Naive thymus-derived CD4-positive, alpha-beta T cell (primary cell): ENCODE measurements at regions of chr16 and their contacts with region 1.

Region 1: DNA sequence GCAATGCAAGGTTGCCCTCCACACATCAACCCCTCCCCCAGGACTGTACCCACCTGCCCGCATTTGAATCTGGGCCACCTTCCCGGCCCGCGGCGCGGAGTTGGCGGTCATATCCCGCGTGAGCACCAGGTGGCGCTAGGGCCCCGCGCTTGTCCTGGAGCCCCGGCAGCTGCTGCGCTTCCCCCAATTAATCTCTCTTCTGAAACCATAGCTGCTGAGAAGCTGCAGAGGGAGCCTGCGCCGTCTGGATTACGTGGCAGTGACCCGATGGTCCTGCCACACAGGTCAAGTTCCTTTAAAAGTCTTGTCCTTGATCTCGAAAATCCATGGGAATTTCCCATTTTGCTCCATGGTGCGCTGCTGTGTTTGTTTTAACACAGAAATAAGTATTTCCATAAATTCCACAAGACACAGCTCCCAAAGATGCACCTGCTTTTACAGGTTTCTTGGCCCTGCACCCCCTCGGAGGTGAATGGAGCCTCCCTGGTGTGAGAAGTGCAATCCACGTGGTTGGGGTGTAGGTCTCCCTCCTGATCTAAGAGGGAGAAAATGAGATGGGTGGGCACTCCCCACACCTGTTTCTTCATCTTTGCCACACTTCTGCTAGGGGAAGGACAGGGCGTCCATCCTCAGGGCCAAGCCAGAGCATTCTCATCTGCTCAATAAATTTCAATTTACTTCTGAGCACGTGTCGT is 22.1 kb downstream of the COX4I1 start:
- DNase-seq: peak; percentile 56 to 88 (median 79)
- ATAC-seq: peak; percentile 93
- H3K4me3 ChIP-seq: no peak overlapping the region
- H3K4me3 Mint-ChIP-seq: no peak overlapping the region
- H3K27ac ChIP-seq: no peak overlapping the region
- H3K27ac Mint-ChIP-seq: no peak overlapping the region
- H3K4me1 ChIP-seq: no peaks in the 10 kb centered on the region
- H3K4me1 Mint-ChIP-seq: peaks cover 0 to 7% (median 5%) of the 10 kb centered on the region in 7 donors
- H3K27me3 ChIP-seq: no peaks in the 10 kb centered on the region
- H3K27me3 Mint-ChIP-seq: peaks cover 0 to 6% (median 4%) of the 10 kb centered on the region in 5 donors

Region 2: GRCh38 chr16:84959045-84959576 is 862.5 kb before region 1 on chr16:
- CTCF ChIA-PET with region 1: no interaction called
- POLR2A ChIA-PET with region 1: no interaction called
- intact Hi-C with region 1: no loop called
- DNase-seq: no peak
- ATAC-seq: no peak
- H3K4me3 ChIP-seq: no peak overlapping the region
- H3K4me3 Mint-ChIP-seq: no peak overlapping the region
- H3K27ac ChIP-seq: no peak overlapping the region
- H3K27ac Mint-ChIP-seq: no peak overlapping the region
- H3K4me1 ChIP-seq: no peaks in the 10 kb centered on the region
- H3K4me1 Mint-ChIP-seq: no peaks in the 10 kb centered on the region
- H3K27me3 ChIP-seq: no peaks in the 10 kb centered on the region
- H3K27me3 Mint-ChIP-seq: peaks cover 0 to 7% (median 0%) of the 10 kb centered on the region in 5 donors

Region 3: GRCh38 chr16:85759631-85760419 is 61.8 kb before region 1 on chr16:
- CTCF ChIA-PET with region 1: no interaction called
- POLR2A ChIA-PET with region 1: no interaction called
- intact Hi-C with region 1: no loop called
- DNase-seq: no peak
- ATAC-seq: peak; percentile 60
- H3K4me3 ChIP-seq: no peak overlapping the region
- H3K4me3 Mint-ChIP-seq: no peak overlapping the region
- H3K27ac ChIP-seq: no peak overlapping the region
- H3K27ac Mint-ChIP-seq: peak overlapping the region in 1 of 9 donors; percentile 41
- H3K4me1 ChIP-seq: no peaks in the 10 kb centered on the region
- H3K4me1 Mint-ChIP-seq: peaks cover 7 to 11% (median 7%) of the 10 kb centered on the region in 7 donors
- H3K27me3 ChIP-seq: no peaks in the 10 kb centered on the region
- H3K27me3 Mint-ChIP-seq: peaks cover 11 to 21% (median 17%) of the 10 kb centered on the region in 5 donors

Region 4: DNA sequence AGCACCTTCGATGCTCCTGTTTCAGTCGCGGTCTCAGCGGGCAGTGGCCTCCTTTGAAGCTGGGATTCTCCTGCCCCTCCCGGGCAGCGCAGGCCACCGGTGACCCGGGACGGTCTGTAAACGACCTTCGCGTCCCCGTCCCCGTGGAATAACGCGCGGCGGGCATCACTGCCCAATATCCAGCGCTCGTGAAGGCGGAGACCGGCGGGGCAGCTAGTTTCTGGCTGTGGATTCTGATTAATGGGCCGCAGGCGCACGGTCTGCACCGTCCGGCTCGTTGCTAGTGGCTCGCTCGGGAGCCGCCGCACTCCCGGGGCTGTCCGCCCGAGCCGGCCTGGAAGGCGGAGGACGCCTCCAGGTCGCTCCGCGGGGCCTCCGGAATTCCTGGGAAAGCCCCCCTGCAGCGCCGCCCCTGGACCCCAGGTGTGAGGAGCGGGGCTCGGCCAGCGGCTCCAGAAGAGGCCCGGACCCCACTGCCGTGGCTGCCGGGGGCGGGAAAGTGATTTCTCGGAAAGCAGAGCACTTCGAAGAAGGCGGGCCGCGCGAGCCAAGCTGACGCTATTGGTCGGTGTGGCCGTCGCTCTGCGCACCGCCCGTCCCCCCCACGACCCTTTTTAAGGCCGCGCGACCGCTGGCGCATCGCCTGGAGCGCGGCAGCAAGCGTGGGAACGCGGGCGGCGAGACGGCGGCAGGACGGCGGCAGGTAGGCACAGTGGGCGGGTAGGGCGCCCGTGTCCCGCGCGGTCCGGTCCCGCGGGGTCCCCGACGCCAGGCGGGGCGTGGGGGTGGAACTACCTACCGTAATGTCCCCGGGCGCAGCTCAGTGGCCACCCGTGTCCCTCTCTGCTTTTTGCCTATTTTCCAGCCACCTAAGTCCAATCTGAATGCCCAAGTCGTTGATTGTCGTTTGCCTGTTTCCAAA is 77.2 kb after region 1 on chr16 and contains the start of gene IRF8:
- CTCF ChIA-PET with region 1: interaction called, 3 read pairs
- POLR2A ChIA-PET with region 1: no interaction called
- intact Hi-C with region 1: loop called (anchors 1 to 5 kb)
- DNase-seq: peak; percentile 55 to 86 (median 65)
- ATAC-seq: peak; percentile 79
- H3K4me3 ChIP-seq: peak within 1 kb of the TSS; percentile 51
- H3K4me3 Mint-ChIP-seq: peak within 1 kb of the TSS; percentile 79 to 92 (median 88)
- H3K27ac ChIP-seq: peak within 1 kb of the TSS; percentile 60
- H3K27ac Mint-ChIP-seq: peak within 1 kb of the TSS; percentile 13 to 83 (median 64)
- H3K4me1 ChIP-seq: peaks cover 18 to 23% of the 10 kb centered on the region in 2 donors
- H3K4me1 Mint-ChIP-seq: peaks cover 37 to 55% (median 51%) of the 10 kb centered on the region in 7 donors
- H3K27me3 ChIP-seq: no peaks in the 10 kb centered on the region
- H3K27me3 Mint-ChIP-seq: peaks cover 0 to 9% (median 0%) of the 10 kb centered on the region in 5 donors
- total RNA-seq, gene IRF8: 3.5 to 105 (median 19.9) TPM

Region 5: DNA sequence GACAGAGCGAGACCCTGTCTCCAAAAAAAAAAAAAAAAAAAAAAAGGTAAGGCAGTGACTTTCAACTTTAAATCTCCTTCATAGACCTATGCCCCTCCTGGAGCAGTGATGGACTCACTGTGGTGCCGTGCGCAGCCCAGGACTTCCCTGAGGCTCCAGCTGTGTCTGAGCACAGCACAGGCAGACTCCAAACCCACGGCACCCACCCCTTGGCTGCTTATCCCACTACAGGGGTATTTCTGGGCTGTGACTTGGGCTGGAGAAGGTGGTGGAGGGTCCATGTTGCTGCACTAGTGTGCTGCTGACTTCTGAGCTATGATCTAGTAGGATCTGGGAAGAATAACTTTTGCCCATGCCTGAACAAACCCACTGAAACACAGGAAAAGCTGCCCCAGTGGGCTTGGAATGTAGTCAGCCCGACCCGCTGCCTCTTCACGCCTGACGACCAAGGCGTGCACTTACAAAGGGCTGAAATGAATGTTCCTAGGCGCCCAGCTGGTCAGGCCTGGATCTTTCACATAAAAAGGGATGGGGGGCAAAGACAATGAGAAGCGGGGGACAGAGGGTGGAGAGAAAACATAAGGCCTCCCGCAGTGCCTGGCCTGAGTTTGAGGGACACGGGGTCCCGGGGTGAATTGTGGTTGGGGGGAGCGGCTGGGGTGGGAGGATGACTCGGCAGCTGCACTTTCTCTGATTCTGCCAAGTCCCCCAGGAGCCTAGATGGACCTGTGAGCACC is 160.4 kb after region 1 on chr16:
- CTCF ChIA-PET with region 1: interaction called, 168 read pairs
- POLR2A ChIA-PET with region 1: no interaction called
- intact Hi-C with region 1: loop called (anchors 1 kb)
- DNase-seq: no peak
- ATAC-seq: no peak
- H3K4me3 ChIP-seq: no peak overlapping the region
- H3K4me3 Mint-ChIP-seq: no peak overlapping the region
- H3K27ac ChIP-seq: no peak overlapping the region
- H3K27ac Mint-ChIP-seq: peak overlapping the region in 1 of 9 donors; percentile 25
- H3K4me1 ChIP-seq: no peaks in the 10 kb centered on the region
- H3K4me1 Mint-ChIP-seq: peaks cover 0 to 24% (median 4%) of the 10 kb centered on the region in 7 donors
- H3K27me3 ChIP-seq: no peaks in the 10 kb centered on the region
- H3K27me3 Mint-ChIP-seq: peaks cover under 1 to 25% (median 10%) of the 10 kb centered on the region in 5 donors

Region 6: DNA sequence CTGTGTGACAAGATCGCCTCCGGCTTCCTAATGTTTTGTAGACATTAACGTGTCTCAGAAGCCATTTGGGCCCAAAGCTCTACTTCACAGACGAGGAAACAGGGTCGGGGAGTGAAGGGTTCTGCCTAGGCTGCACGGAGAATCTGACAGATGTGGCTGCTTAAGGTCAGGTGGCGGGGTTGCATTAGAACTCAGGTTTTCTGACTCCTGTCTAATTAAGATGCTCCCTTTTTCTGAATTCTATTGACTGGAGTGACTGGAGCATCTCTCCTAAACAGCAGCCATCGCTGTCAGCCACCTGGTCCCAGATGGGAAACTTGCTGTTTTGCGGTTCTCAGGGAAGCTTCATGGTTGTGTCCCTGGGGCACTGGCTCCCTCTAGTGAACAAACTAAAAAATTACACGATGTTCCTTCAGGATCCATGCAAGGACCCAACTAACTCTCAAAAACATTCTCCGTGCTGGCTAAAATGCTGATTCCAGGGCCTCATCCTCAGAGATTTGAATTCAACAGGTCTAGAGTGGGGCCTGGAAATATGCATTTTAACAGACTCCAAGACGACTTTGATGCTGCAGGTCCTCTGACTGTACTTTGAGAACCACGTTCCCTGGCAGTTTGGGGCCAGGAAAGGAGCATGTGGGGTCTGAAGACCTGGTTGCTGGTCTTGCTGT is 194.7 kb after region 1 on chr16:
- CTCF ChIA-PET with region 1: interaction called, 22 read pairs
- POLR2A ChIA-PET with region 1: no interaction called
- intact Hi-C with region 1: loop called (anchors 1 kb)
- DNase-seq: peak in 6 of 9 donors; percentile 14 to 56 (median 40)
- ATAC-seq: peak; percentile 48
- H3K4me3 ChIP-seq: no peak overlapping the region
- H3K4me3 Mint-ChIP-seq: no peak overlapping the region
- H3K27ac ChIP-seq: no peak overlapping the region
- H3K27ac Mint-ChIP-seq: no peak overlapping the region
- H3K4me1 ChIP-seq: no peaks in the 10 kb centered on the region
- H3K4me1 Mint-ChIP-seq: no peaks in the 10 kb centered on the region
- H3K27me3 ChIP-seq: no peaks in the 10 kb centered on the region
- H3K27me3 Mint-ChIP-seq: peaks cover 15 to 37% (median 33%) of the 10 kb centered on the region in 5 donors